Breast epithelium (tissue), 4 donors: ENCODE measurements at regions of chr18 and their contacts with region 1.

Region 1: DNA sequence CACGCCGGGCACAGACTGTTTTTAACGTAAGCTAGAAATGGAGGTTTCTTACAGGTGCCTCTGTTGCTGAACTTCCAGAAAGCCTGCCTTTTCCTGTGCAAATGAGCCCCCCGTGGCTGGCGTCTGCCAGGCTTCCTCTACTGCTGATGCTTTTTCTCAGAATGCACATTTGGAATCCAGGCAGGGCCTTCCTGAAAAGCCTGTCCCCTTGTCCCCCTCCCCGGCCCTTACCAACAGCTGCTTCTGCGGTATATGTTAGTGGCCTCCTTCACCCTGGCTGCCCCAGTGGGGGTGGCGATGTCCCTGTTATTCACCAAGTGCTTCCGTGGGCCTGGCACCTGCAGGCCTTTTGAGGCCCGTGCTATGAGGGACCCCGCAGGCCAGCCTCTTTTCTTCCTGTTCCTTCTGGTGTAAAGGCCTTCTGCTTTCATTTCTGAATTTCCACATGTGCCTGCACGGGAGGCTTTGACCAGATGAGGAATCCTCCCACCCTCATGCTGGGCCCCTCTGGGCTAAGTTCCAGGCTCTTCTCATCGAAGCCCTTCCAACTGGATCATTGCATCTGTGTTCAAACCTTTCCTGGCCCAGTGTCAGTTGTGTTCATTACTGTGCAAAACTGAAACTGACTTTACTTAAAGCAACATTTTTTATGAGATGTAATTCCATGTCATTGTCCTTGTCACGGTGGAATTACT is 10.4 kb downstream of the CNDP2 start:
- DNase-seq: no peak
- H3K4me3 ChIP-seq: no peak overlapping the region
- H3K27ac ChIP-seq: no peak overlapping the region
- H3K4me1 ChIP-seq: no peaks in the 10 kb centered on the region
- H3K27me3 ChIP-seq: no peaks in the 10 kb centered on the region
- CTCF ChIP-seq: no peak
- POLR2A ChIP-seq: no peak

Region 2: GRCh38 chr18:74478880-74479279 is 27.7 kb before region 1 on chr18:
- intact Hi-C with region 1: loop called (anchors 1 kb)
- DNase-seq: no peak
- H3K4me3 ChIP-seq: no peak overlapping the region
- H3K27ac ChIP-seq: no peak overlapping the region
- H3K4me1 ChIP-seq: no peaks in the 10 kb centered on the region
- H3K27me3 ChIP-seq: no peaks in the 10 kb centered on the region
- CTCF ChIP-seq: no peak
- POLR2A ChIP-seq: no peak

Region 3: DNA sequence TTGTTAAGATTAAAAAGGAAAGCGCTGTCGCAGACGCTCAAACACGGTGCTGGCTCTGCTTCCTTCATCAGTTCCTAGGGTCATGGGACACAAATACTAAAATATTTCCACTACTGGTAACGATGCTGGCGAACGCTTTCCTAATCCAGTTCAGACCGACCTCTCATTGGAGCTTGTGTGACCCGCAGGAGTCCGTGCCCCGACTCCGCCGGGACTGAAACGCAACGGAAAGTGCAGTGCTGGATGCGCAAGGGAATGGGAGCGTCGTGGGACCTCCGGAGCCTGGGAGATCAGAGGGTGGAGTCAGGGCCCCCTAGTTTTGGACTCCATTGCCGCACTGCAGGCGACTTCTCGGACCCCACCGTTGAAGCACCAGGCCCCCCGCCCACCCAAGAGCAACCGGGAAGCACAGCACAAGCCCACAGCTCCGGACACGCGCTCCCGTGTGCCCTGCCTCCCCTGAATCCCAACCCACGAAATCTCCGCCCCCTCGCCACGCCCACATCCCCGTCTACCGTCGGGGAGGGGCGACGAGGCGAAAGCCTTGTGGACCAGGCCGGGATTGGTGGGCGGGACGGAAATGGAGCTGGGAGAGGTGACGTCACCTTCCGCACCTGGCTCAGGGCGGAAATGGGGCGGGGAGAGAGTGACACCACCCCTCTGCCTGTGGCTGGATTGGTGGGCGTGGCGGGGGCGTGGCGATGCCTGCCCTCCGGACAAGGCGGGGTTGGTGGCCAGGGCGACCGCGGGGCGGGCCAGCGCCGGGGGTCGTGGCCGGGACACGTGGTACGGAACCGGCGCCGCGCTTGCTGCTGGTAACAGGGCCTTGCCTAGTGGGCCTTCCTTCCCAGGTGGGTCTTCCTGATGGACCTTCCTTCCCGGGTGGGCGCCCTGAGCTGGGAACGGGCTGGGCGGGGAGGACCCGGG is 10.7 kb before region 1 on chr18 and contains the start of gene CNDP2:
- intact Hi-C with region 1: loop called (anchors 1 kb)
- DNase-seq: peak; percentile 100
- H3K4me3 ChIP-seq: peak within 1 kb of the TSS; percentile 78 to 92 (median 89)
- H3K27ac ChIP-seq: peak within 1 kb of the TSS; percentile 97 to 98
- H3K4me1 ChIP-seq: no peaks in the 10 kb centered on the region
- H3K27me3 ChIP-seq: no peaks in the 10 kb centered on the region
- CTCF ChIP-seq: no peak
- POLR2A ChIP-seq: peak; percentile 81
- total RNA-seq, gene CNDP2: 81.0 to 104 (median 95.7) TPM

Region 4: GRCh38 chr18:74541703-74542555 is 35.4 kb after region 1 on chr18:
- intact Hi-C with region 1: no loop called
- DNase-seq: peak in 1 of 2 donors; percentile 59
- H3K4me3 ChIP-seq: no peak overlapping the region
- H3K27ac ChIP-seq: peak overlapping the region; percentile 9 to 16
- H3K4me1 ChIP-seq: no peaks in the 10 kb centered on the region
- H3K27me3 ChIP-seq: no peaks in the 10 kb centered on the region
- CTCF ChIP-seq: no peak
- POLR2A ChIP-seq: no peak

Region 5: GRCh38 chr18:76450452-76451395 is 1944.2 kb after region 1 on chr18:
- intact Hi-C with region 1: no loop called
- DNase-seq: peak in 1 of 2 donors; percentile 21
- H3K4me3 ChIP-seq: peak overlapping the region; percentile 57 to 89 (median 64)
- H3K27ac ChIP-seq: peak overlapping the region; percentile 79 to 94
- H3K4me1 ChIP-seq: peaks cover 3 to 4% of the 10 kb centered on the region in 2 donors
- H3K27me3 ChIP-seq: no peaks in the 10 kb centered on the region
- CTCF ChIP-seq: no peak
- POLR2A ChIP-seq: no peak